Activated CD8-positive, alpha-beta memory T cell treated with anti-CD3 and anti-CD28 coated beads, Interleukin-2, amount 10 ng/mL, durations not matched to agents 7 days and 5 days (primary cell): ENCODE measurements at regions of chr12 and their contacts with region 1.

Region 1: DNA sequence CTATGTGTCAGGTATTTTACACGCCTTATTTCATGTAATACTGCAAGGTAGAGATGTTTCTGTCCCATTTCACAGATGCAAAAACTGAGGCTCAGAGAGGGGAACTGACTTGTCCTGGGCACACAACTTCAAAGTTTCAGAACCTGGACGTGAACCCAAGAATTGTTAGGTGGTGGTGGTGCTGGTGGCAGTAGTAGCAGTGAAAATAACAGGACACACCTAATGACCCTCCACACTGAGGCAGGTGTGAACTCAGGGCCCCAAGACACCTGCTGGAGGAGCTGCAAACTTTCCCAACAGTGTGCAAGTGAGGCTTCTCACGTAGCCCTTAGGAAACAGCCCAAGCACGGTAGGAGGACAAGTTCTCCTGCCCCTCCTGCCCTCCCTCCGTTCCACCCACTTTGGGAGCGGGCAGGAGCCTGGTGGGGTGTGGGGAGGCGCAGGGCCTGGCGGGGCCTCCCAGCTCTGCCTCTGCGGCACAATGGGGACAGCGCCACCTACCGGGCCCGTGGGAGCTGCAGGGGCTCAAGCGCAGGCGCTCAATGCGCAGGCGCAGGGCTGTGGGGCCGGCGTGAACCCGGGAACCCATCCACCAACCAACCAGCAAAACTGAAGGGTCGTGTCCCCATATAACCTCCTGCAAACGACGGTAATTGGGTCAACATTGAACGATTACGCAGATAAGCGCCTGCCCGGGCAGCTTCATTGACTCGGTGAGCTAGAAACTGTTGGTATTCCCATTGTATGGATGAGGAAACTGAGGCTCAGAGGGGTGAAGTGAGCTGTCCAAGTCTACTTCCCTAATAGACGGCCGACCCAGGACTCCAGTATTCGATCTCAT is 12.0 kb upstream of the TRPV4 start:
- DNase-seq: peak; percentile 90
- ATAC-seq: peak; percentile 99
- H3K4me3 Mint-ChIP-seq: peak overlapping the region; percentile 14
- H3K27ac Mint-ChIP-seq: no peak overlapping the region
- H3K4me1 Mint-ChIP-seq: peaks cover 7% of the 10 kb centered on the region
- H3K27me3 Mint-ChIP-seq: no peaks in the 10 kb centered on the region

Region 2: DNA sequence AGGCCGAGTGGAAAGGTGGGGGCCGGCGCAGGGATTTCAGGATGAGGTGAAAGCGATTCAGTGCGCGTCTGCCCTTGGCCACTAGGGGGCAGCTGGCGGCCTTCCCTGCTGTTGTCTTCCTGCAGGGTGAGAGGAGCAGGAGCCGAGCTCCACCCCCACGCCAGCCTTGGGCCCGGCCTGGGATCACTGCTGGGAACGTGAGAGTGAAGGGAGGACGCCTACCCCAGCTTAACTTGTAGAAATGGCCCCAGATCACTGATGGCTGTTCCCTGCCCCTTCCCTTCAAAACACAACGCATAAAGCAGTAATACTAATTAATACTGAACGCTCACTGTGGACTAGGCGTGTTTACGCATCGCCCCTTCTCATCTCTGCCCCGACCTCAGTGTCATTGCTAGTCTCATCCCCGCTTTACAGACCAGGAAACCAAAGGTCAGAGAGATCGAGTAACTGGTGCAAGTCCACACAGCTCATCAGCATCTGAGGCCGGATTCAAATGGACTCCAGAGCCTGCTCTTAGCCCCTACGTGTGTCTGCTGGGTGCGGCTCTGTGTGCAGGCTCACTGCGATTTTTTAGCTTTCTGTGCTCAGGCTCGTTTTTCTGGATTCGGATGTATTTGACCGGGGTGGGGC is 247.3 kb before region 1 on chr12:
- CTCF ChIA-PET with region 1: interaction called, 13 read pairs
- DNase-seq: peak; percentile 72
- ATAC-seq: peak; percentile 73
- H3K4me3 Mint-ChIP-seq: no peak overlapping the region
- H3K27ac Mint-ChIP-seq: no peak overlapping the region
- H3K4me1 Mint-ChIP-seq: peaks cover 26% of the 10 kb centered on the region
- H3K27me3 Mint-ChIP-seq: no peaks in the 10 kb centered on the region

Region 3: GRCh38 chr12:109719236-109720022 is 125.8 kb before region 1 on chr12:
- CTCF ChIA-PET with region 1: no interaction called
- DNase-seq: no peak
- ATAC-seq: no peak
- H3K4me3 Mint-ChIP-seq: no peak overlapping the region
- H3K27ac Mint-ChIP-seq: no peak overlapping the region
- H3K4me1 Mint-ChIP-seq: peaks cover 3% of the 10 kb centered on the region
- H3K27me3 Mint-ChIP-seq: peaks cover 42% of the 10 kb centered on the region

Region 4: GRCh38 chr12:109744986-109745942 is 99.9 kb before region 1 on chr12:
- CTCF ChIA-PET with region 1: no interaction called
- DNase-seq: no peak
- ATAC-seq: no peak
- H3K4me3 Mint-ChIP-seq: no peak overlapping the region
- H3K27ac Mint-ChIP-seq: no peak overlapping the region
- H3K4me1 Mint-ChIP-seq: no peaks in the 10 kb centered on the region
- H3K27me3 Mint-ChIP-seq: peaks cover 28% of the 10 kb centered on the region

Region 5: DNA sequence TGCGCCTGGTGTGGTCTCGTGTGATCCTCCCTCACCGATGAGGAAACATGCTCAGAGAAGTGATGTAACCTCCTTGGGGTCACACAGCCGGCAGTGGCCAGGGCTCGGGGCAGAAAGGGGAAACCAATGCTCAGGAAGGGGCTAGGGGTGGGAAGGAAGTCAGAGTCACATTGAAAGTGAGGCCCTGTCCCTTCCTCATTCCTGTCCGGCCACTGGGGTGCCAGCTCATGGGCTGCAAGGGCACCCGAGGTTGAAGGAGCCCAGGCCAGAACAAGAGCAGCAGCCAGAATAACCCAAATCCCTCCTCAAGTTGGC is 17.0 kb before region 1 on chr12:
- CTCF ChIA-PET with region 1: interaction called, 23 read pairs
- DNase-seq: peak; percentile 48
- ATAC-seq: peak; percentile 63
- H3K4me3 Mint-ChIP-seq: no peak overlapping the region
- H3K27ac Mint-ChIP-seq: no peak overlapping the region
- H3K4me1 Mint-ChIP-seq: peaks cover 10% of the 10 kb centered on the region
- H3K27me3 Mint-ChIP-seq: peaks cover 33% of the 10 kb centered on the region

Region 6: DNA sequence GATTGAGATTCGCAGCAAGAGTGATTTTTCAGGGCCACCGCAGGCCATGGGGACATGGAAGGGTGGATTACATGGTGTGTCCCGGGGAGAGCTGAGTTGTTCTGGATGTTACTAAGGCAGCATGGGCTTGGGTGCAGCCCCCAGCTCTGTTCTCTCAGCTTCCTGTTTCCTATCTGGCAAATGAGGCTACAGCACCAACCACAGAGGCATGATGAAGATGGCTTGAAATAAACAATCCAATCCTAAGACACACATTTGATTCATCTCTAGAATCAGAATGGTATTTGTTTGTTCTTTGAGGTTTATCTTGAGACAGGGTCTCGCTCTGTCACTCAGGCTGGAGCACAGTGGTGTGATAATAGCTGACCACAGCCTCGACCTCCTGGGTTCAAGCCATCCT is 13.6 kb after region 1 on chr12:
- CTCF ChIA-PET with region 1: interaction called, 41 read pairs
- DNase-seq: no peak
- ATAC-seq: peak; percentile 64
- H3K4me3 Mint-ChIP-seq: no peak overlapping the region
- H3K27ac Mint-ChIP-seq: peak overlapping the region; percentile 56
- H3K4me1 Mint-ChIP-seq: peaks cover 17% of the 10 kb centered on the region
- H3K27me3 Mint-ChIP-seq: no peaks in the 10 kb centered on the region

Region 7: GRCh38 chr12:109880016-109880931 is 35.1 kb after region 1 on chr12 and contains the start of gene GLTP:
- CTCF ChIA-PET with region 1: interaction called, 20 read pairs
- DNase-seq: peak; percentile 89
- ATAC-seq: peak; percentile 97
- H3K4me3 Mint-ChIP-seq: peak within 1 kb of the TSS; percentile 94
- H3K27ac Mint-ChIP-seq: peak within 1 kb of the TSS; percentile 87
- H3K4me1 Mint-ChIP-seq: peaks cover 43% of the 10 kb centered on the region
- H3K27me3 Mint-ChIP-seq: no peaks in the 10 kb centered on the region
- total RNA-seq, gene GLTP: 16.3 to 19.2 TPM

Region 8: GRCh38 chr12:109899783-109900751 is 54.9 kb after region 1 on chr12 and contains the start of gene TCHP:
- CTCF ChIA-PET with region 1: interaction called, 10 read pairs
- DNase-seq: peak; percentile 84
- ATAC-seq: peak; percentile 92
- H3K4me3 Mint-ChIP-seq: peak within 1 kb of the TSS; percentile 80
- H3K27ac Mint-ChIP-seq: peak within 1 kb of the TSS; percentile 95
- H3K4me1 Mint-ChIP-seq: peaks cover 27% of the 10 kb centered on the region
- H3K27me3 Mint-ChIP-seq: no peaks in the 10 kb centered on the region
- total RNA-seq, gene TCHP: 38.4 to 40.1 TPM